ENCODE measurements at regions of chr12 and their contacts with region 1.

Region 1: GRCh38 chr12:98698603-98699463 is 53.7 kb downstream of the APAF1 start:
- DNase-seq: peak; percentile 65
- H3K4me3 ChIP-seq: no peak overlapping the region
- H3K27ac ChIP-seq: no peak overlapping the region
- H3K4me1 ChIP-seq: peaks cover 0 to 3% of the 10 kb centered on the region in 2 experiments; a peak in 2 of 4 replicates
- H3K27me3 ChIP-seq: no peaks in the 10 kb centered on the region
- CTCF ChIP-seq: peak; percentile 74
- EP300 ChIP-seq: no peak
- RAD21 ChIP-seq: peak; percentile 89

Region 2: GRCh38 chr12:98418357-98419075 is 280.3 kb before region 1 on chr12:
- CTCF ChIA-PET with region 1: no interaction called
- POLR2A ChIA-PET with region 1: no interaction called
- DNase-seq: peak; percentile 27
- H3K4me3 ChIP-seq: peak overlapping the region; percentile 17 to 21; a peak in 2 of 4 replicates
- H3K27ac ChIP-seq: peak overlapping the region; percentile 41 to 62; a peak in 3 of 4 replicates
- H3K4me1 ChIP-seq: peaks cover 17 to 20% of the 10 kb centered on the region in 2 experiments; a peak in 3 of 4 replicates
- H3K27me3 ChIP-seq: no peaks in the 10 kb centered on the region
- CTCF ChIP-seq: no peak
- EP300 ChIP-seq: no peak
- RAD21 ChIP-seq: no peak

Region 3: GRCh38 chr12:98709022-98709421 is 10.2 kb after region 1 on chr12:
- CTCF ChIA-PET with region 1: interaction called, 21 read pairs
- POLR2A ChIA-PET with region 1: no interaction called
- DNase-seq: no peak
- H3K4me3 ChIP-seq: no peak overlapping the region
- H3K27ac ChIP-seq: no peak overlapping the region
- H3K4me1 ChIP-seq: no peaks in the 10 kb centered on the region
- H3K27me3 ChIP-seq: no peaks in the 10 kb centered on the region
- CTCF ChIP-seq: no peak
- EP300 ChIP-seq: no peak
- RAD21 ChIP-seq: no peak

Region 4: DNA sequence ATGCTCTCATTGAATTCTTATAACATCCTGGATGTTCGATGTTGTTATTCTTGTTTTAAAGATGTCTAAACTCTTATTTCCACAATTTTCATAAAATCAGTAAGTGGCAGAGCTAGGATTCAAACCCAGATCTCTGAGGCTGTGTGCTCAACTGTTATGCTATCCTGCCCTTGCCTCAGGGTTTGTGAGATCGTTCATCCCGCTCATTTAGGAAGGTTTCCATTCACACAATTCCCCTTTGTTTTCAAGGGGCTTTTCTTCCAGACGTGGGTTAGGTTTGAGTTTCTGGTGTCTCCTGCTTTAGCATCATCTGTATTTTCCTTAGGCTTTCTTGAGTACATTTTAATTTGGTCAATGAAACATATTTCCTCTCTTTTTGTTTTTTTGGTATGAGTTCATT is 15.6 kb after region 1 on chr12:
- CTCF ChIA-PET with region 1: interaction called, 21 read pairs
- POLR2A ChIA-PET with region 1: no interaction called
- DNase-seq: no peak
- H3K4me3 ChIP-seq: no peak overlapping the region
- H3K27ac ChIP-seq: no peak overlapping the region
- H3K4me1 ChIP-seq: no peaks in the 10 kb centered on the region
- H3K27me3 ChIP-seq: no peaks in the 10 kb centered on the region
- CTCF ChIP-seq: no peak
- EP300 ChIP-seq: no peak
- RAD21 ChIP-seq: no peak